AG04450 (cell line): ENCODE measurements at regions of chr9 and their contacts with region 1.

Region 1: DNA sequence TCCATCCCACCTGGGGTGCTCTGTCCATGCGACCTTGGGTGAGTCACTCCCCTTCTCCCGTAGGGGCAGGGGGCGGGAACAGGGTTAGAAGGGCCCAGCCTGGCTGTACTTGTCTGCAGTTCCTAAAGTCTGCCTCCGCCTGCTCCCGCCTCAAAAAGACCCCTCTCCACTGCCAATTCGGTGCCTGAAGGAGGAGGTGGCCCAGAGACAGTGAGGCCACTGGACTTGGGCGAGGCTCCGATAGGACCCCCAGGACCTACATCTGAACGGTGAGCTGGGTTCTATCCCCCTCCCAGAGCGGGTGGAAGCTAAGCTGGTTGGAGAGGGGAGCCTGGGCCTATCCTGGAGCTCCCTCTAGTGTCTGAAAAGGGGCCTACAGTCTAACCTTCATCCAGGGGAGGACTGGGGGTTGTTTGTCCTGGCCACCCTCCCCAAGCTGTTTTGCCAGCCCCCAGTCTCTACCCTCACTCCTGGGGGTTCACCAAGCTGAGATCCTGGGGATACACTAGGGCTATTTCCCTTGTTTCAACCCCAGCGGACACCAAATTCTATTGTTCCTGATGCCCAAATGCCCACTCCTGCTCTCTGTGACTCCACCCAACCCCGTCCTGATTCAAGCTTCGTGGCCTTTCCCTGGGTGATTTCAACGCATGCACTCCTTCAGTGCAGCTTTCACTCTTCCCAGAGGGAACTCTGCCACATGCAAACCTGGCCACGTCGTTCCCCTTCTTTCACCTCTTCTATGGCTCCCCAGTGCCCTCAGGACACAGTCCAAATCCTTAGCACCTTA is 6.1 kb upstream of the CRB2 start:
- DNase-seq: peak; percentile 13
- H3K4me3 ChIP-seq: no peak overlapping the region
- H3K27ac ChIP-seq: no peak overlapping the region
- H3K27me3 ChIP-seq: peaks cover 36% of the 10 kb centered on the region
- CTCF ChIP-seq: peak; percentile 99

Region 2: GRCh38 chr9:123073991-123074422 is 275.9 kb before region 1 on chr9:
- CTCF ChIA-PET with region 1: interaction called, 19 read pairs
- POLR2A ChIA-PET with region 1: no interaction called
- DNase-seq: peak; percentile 8
- H3K4me3 ChIP-seq: no peak overlapping the region
- H3K27ac ChIP-seq: peak overlapping the region; percentile 55
- H3K27me3 ChIP-seq: no peaks in the 10 kb centered on the region
- CTCF ChIP-seq: 0 out of 2 replicates have a peak, but pooled peaks have one; percentile 14

Region 3: DNA sequence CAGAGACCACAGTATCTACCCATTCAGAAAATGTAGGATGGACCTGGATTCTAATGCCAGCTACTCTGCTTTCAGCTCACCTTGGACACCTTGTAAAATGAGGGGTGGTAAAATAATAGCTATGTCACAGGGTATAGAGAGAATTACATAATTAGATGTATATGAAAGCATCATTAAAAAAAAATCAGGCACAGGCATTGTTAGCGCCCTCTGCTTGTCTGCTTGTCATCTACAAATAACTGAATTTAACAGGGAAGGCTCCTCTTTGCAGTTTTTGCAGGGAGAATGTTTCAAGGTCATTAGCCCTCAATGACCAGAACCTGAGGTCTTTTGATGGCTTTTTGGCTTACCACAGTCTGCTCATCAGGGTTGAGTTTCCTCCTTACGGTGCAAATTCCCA is 258.4 kb before region 1 on chr9:
- CTCF ChIA-PET with region 1: interaction called, 17 read pairs
- POLR2A ChIA-PET with region 1: no interaction called
- DNase-seq: no peak
- H3K4me3 ChIP-seq: no peak overlapping the region
- H3K27ac ChIP-seq: no peak overlapping the region
- H3K27me3 ChIP-seq: no peaks in the 10 kb centered on the region
- CTCF ChIP-seq: peak; percentile 4; the same call in 1 of the 2 replicates

Region 4: GRCh38 chr9:123225374-123225813 is 124.5 kb before region 1 on chr9:
- CTCF ChIA-PET with region 1: interaction called, 10 read pairs
- POLR2A ChIA-PET with region 1: no interaction called
- DNase-seq: peak; percentile 47
- H3K4me3 ChIP-seq: no peak overlapping the region
- H3K27ac ChIP-seq: no peak overlapping the region
- H3K27me3 ChIP-seq: no peaks in the 10 kb centered on the region
- CTCF ChIP-seq: peak; percentile 69

Region 5: GRCh38 chr9:123360161-123361085 is 10.5 kb after region 1 on chr9:
- CTCF ChIA-PET with region 1: interaction called, 12 read pairs
- POLR2A ChIA-PET with region 1: no interaction called
- DNase-seq: no peak
- H3K4me3 ChIP-seq: no peak overlapping the region
- H3K27ac ChIP-seq: no peak overlapping the region
- H3K27me3 ChIP-seq: peaks cover 13% of the 10 kb centered on the region
- CTCF ChIP-seq: no peak